ENCODE measurements at regions of chr22 and their contacts with region 1.

Region 1: DNA sequence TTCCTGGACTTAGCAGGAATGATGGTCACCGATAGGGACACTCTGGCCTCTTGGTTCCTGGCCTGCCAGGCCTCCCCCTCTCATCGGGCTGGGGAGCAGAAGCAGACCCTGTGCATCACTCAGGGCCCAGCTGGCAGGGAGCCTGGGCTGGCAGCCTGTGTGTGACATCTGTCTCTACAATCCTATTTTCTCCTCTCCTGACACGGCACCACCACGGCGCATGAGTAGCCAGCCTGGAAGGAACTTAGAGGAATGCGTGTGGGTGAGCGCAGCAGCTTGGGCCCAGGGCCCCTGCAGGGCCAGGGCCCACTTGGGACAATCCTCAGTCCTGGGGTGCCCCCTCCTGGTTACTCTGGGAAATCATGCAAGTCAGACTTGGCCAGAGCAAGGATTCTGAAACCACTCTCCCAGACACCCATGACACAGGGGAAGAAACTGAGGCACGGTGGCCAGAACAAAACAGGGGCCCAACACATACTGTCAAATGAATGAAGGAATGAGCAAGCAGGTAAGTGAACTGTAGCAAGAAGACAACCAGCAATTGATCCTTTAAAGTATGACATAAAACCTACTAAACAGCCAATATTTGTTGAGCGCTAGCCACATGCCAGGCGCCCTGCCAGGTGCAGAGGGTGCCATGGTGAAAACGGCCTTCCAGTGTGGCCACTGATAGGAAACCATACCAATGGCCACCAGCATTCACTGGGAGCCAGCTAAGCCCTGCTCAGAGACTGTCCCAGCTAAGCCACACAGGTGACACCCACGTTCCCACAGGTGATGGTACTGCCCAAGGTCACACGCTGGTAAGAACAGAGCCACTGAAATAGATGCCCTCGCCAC is 13.3 kb downstream of the RSPH14 start:
- DNase-seq: peak; percentile 74 to 83 (median 78)
- ATAC-seq: peak; percentile 84 to 89
- H3K4me3 ChIP-seq: no peak overlapping the region
- H3K27ac ChIP-seq: no peak overlapping the region
- H3K4me1 ChIP-seq: no peaks in the 10 kb centered on the region
- H3K27me3 ChIP-seq: no peaks in the 10 kb centered on the region

Region 2: DNA sequence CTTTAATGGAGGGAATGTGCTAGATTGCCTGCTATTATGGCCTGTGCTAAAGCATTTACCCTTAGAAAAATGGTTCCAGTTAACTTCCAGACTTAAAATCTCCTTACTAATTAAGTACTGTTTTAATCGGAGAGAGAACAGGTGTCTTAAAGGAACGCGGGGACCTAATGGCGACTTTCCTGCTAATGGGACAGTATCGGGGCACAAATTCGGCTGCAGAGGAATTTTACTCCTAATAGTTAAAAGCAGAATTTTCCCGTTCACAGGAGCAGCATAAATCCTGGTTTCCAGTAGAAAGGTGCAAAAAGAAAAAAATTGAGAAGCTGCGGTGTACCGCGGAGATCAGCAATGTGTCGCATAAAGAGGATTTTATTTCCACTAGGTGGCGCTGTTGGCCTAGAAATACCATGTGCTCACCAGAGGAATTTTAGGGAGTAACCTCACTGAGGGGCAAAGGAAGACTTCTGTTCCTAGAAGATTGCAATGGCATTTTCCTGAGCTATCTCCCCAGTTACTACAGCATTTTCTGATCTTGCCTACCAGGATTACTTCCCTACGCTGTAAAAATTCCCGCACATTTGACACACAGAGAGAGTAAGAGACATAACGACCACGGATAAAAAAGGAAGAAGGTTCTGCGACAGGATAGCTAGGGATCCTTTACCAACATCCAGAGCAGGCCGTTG is 664.5 kb before region 1 on chr22:
- intact Hi-C with region 1: loop called in 1 of 4 experiments (anchors 10 kb)
- DNase-seq: no peak
- ATAC-seq: peak; percentile 36 to 59
- H3K4me3 ChIP-seq: no peak overlapping the region
- H3K27ac ChIP-seq: no peak overlapping the region
- H3K4me1 ChIP-seq: no peaks in the 10 kb centered on the region
- H3K27me3 ChIP-seq: no peaks in the 10 kb centered on the region

Region 3: DNA sequence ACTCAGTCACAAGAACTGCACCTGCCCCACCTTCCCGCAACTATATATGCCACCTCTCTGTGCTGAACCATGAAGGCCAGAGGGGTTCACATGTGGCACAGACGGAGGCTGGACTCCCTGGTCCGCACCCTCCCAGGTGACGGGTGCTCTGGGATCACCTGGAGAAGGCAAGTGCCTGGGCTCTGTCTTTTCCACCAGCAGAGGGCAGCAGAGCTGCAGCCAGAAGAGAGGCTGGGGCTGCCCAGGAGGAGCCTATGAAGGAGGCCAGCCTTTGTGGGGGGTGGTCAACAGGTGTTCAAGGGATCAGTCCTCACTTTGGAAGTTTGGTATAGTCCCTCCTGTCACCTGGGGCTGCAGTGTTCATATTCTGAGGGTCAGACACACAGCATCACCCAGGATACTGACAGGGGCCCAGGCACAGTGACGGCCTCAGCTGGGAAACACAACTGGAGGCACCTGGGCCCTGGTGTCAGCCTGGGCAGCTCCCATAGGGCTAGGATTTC is 280.1 kb before region 1 on chr22:
- intact Hi-C with region 1: loop called in 2 of 4 experiments (anchors 10 kb)
- DNase-seq: peak; percentile 53 to 82 (median 77)
- ATAC-seq: peak; percentile 77 to 78
- H3K4me3 ChIP-seq: no peak overlapping the region
- H3K27ac ChIP-seq: no peak overlapping the region
- H3K4me1 ChIP-seq: no peaks in the 10 kb centered on the region
- H3K27me3 ChIP-seq: no peaks in the 10 kb centered on the region

Region 4: GRCh38 chr22:22855617-22856308 is 272.7 kb before region 1 on chr22:
- intact Hi-C with region 1: loop called in 1 of 4 experiments (anchors 10 kb)
- DNase-seq: peak in 1 of 3 donors; percentile 66
- ATAC-seq: peak in 1 of 2 donors; percentile 32
- H3K4me3 ChIP-seq: no peak overlapping the region
- H3K27ac ChIP-seq: no peak overlapping the region
- H3K4me1 ChIP-seq: no peaks in the 10 kb centered on the region
- H3K27me3 ChIP-seq: no peaks in the 10 kb centered on the region

Region 5: DNA sequence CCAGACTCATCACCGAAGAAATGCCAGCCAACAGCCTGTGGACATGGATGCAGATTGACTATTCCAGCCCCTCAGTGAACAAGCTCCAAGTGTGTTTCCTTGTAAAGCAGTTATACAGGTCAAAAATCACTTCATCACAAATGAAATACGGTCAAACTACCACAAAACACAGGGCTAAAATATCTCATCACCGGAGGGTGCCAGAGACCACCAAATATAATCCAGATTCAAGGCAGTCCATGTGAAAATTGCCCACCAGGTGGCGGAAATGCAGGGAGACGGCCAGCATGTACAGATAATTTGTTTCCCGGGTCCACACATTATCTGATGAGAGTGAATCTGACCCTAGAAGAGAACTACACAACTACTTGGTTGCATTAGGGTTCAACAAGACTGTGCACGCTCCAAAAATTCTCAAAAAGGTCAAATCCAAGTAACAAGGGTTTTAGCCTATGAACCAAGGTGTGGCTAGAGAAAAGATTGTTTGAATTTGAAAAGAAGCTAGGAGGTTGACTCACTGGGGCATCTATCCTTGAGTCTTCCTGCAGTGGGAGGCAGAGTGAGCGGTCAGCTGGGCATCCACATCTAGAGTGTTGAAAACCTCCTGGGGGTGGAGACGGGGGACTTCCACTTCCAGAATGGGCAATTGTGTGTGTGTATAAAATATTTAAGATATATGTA is 169.2 kb before region 1 on chr22:
- intact Hi-C with region 1: loop called (anchors 1 to 2 kb)
- DNase-seq: peak; percentile 74 to 85 (median 77)
- ATAC-seq: peak; percentile 55 to 58
- H3K4me3 ChIP-seq: no peak overlapping the region
- H3K27ac ChIP-seq: no peak overlapping the region
- H3K4me1 ChIP-seq: no peaks in the 10 kb centered on the region
- H3K27me3 ChIP-seq: no peaks in the 10 kb centered on the region

Region 6: GRCh38 chr22:23183061-23183698 is 54.7 kb after region 1 on chr22:
- intact Hi-C with region 1: no loop called
- DNase-seq: peak; percentile 60 to 82 (median 68)
- ATAC-seq: peak in 1 of 2 donors; percentile 4
- H3K4me3 ChIP-seq: peak overlapping the region; percentile 88
- H3K27ac ChIP-seq: no peak overlapping the region
- H3K4me1 ChIP-seq: peaks cover 11% of the 10 kb centered on the region
- H3K27me3 ChIP-seq: no peaks in the 10 kb centered on the region

Measured in right cardiac atrium (tissue), 5 donors.